Activated B cell treated with CpG ODN at 0.5 μM for 24 hours (primary cell): ENCODE measurements at regions of chrX and their contacts with region 1.

Region 1: GRCh38 chrX:10119399-10119990 is 37.3 kb upstream of the CLCN4 start:
- DNase-seq: peak; percentile 33
- ATAC-seq: peak; percentile 33
- H3K4me3 Mint-ChIP-seq: peak overlapping the region; percentile 42
- H3K27ac Mint-ChIP-seq: peak overlapping the region; percentile 89
- H3K4me1 Mint-ChIP-seq: peaks cover 74% of the 10 kb centered on the region
- H3K27me3 Mint-ChIP-seq: no peaks in the 10 kb centered on the region
- CTCF ChIP-seq: peak; percentile 89

Region 2: DNA sequence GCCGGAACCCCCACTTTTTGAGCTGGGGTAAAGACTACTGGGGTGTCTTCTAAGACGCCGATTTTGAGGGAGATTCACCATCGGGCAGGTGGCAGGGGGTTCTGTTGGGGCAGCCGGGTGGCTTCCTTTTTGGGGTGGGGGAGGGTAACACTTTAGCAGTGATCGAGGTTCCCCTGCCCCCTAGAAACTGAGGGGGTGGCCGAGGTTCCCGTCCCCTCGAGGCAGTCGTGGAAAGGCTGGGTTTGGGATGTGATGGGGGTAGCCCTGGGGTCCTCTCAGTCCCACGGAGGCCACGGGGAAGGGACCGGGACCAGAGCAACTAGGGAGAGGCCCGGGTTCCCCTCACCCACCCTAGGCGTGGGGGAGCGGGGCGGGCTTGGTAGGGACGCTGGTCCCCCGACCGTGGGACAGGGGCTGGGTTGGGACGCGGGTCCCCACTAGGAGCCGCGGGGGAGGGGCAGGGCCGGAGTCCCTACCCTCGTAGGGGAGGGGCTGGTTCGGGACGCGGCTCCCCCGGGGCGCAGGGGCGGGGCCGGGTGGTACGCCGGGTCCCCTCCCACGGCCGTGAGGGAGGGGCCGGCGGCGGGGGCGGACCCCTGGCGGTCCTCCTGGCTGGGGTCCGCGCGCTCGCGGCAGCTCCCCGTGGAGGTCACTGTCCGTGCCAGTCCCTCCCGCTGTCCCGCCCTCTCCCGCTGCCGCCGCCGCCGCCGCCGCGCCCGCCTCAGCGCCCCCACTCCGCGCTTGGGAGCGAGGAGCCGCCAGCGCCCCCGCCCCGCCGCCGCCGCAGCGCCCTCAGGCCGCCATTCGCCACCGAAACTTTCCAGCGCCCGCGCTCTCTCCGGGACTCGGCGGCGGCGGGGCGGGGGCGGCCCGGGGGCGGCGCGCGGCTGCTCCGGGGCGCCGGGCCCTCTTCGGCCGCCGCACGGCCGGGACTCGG is 654.8 kb before region 1 on chrX and contains the start of gene TBL1X:
- CTCF ChIA-PET with region 1: no interaction called
- POLR2A ChIA-PET with region 1: no interaction called
- intact Hi-C with region 1: loop called (anchors 1 kb)
- DNase-seq: peak; percentile 66
- ATAC-seq: peak; percentile 70
- H3K4me3 Mint-ChIP-seq: peak within 1 kb of the TSS; percentile 78
- H3K27ac Mint-ChIP-seq: peak within 1 kb of the TSS; percentile 86
- H3K4me1 Mint-ChIP-seq: peaks cover 48% of the 10 kb centered on the region
- H3K27me3 Mint-ChIP-seq: no peaks in the 10 kb centered on the region
- CTCF ChIP-seq: no peak
- total RNA-seq, gene TBL1X: 37.6 and 38.5 TPM in 2 replicates

Region 3: GRCh38 chrX:9942086-9942485 is 177.4 kb before region 1 on chrX:
- CTCF ChIA-PET with region 1: interaction called, 5 read pairs
- POLR2A ChIA-PET with region 1: no interaction called
- intact Hi-C with region 1: loop called (anchors 1 kb)
- DNase-seq: peak; percentile 26
- ATAC-seq: peak; percentile 84
- H3K4me3 Mint-ChIP-seq: peak overlapping the region; percentile 56
- H3K27ac Mint-ChIP-seq: peak overlapping the region; percentile 25
- H3K4me1 Mint-ChIP-seq: peaks cover 29% of the 10 kb centered on the region
- H3K27me3 Mint-ChIP-seq: no peaks in the 10 kb centered on the region
- CTCF ChIP-seq: no peak

Region 4: GRCh38 chrX:10001496-10001895 is 118.0 kb before region 1 on chrX:
- CTCF ChIA-PET with region 1: interaction called, 73 read pairs
- POLR2A ChIA-PET with region 1: interaction called, 38 read pairs
- intact Hi-C with region 1: no loop called
- DNase-seq: no peak
- ATAC-seq: no peak
- H3K4me3 Mint-ChIP-seq: no peak overlapping the region
- H3K27ac Mint-ChIP-seq: no peak overlapping the region
- H3K4me1 Mint-ChIP-seq: peaks cover 18% of the 10 kb centered on the region
- H3K27me3 Mint-ChIP-seq: no peaks in the 10 kb centered on the region
- CTCF ChIP-seq: no peak

Region 5: GRCh38 chrX:10052906-10053625 is 66.4 kb before region 1 on chrX:
- CTCF ChIA-PET with region 1: interaction called, 15 read pairs
- POLR2A ChIA-PET with region 1: interaction called, 6 read pairs
- intact Hi-C with region 1: loop called (anchors 2 kb)
- DNase-seq: no peak
- ATAC-seq: peak; percentile 78
- H3K4me3 Mint-ChIP-seq: no peak overlapping the region
- H3K27ac Mint-ChIP-seq: peak overlapping the region; percentile 78
- H3K4me1 Mint-ChIP-seq: peaks cover 51% of the 10 kb centered on the region
- H3K27me3 Mint-ChIP-seq: no peaks in the 10 kb centered on the region
- CTCF ChIP-seq: no peak

Region 6: DNA sequence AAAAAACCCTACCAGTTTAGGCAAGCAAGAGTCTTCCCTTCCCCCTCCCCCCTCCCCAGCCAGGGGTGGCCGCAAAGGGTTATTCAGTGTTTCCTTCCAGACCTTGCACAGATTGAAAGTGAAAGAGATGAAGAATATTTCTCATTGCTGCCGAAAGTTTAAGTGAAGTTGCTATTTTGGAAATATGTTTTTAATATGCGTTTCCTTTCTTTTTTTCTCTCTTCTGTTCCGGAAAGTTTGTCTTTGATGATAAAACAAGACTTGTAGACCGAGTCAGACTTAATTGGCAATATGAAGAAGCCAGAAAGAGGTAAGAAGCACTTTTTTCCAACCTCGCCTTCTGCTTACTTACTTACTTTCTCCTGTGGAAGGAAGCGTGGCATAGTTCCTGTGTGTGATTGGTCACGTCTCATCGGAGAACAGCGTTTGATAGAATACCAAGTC is 21.2 kb before region 1 on chrX:
- CTCF ChIA-PET with region 1: interaction called, 10 read pairs
- POLR2A ChIA-PET with region 1: interaction called, 229 read pairs
- intact Hi-C with region 1: loop called (anchors 1 kb)
- DNase-seq: no peak
- ATAC-seq: peak; percentile 81
- H3K4me3 Mint-ChIP-seq: peak overlapping the region; percentile 85
- H3K27ac Mint-ChIP-seq: peak overlapping the region; percentile 91
- H3K4me1 Mint-ChIP-seq: peaks cover 62% of the 10 kb centered on the region
- H3K27me3 Mint-ChIP-seq: no peaks in the 10 kb centered on the region
- CTCF ChIP-seq: no peak